Common myeloid progenitor, CD34-positive (primary cell): ENCODE measurements at regions of chr11 and their contacts with region 1.

Region 1: GRCh38 chr11:832321-833113 is at the start of gene CD151:
- DNase-seq: peak in 1 of 3 donors; percentile 58
- H3K4me3 ChIP-seq: peak within 1 kb of the TSS; percentile 37 to 78 (median 66)
- H3K27ac ChIP-seq: peak within 1 kb of the TSS in 1 of 2 experiments; percentile 54
- H3K4me1 ChIP-seq: peaks cover 0 to 72% (median 63%) of the 10 kb centered on the region in 4 experiments
- H3K27me3 ChIP-seq: peaks cover 0 to 56% (median 22%) of the 10 kb centered on the region in 5 experiments

Region 2: GRCh38 chr11:765025-765801 is 67.3 kb before region 1 on chr11:
- CTCF ChIA-PET with region 1: no interaction called
- POLR2A ChIA-PET with region 1: no interaction called
- DNase-seq: peak; percentile 83 to 92 (median 87)
- H3K4me3 ChIP-seq: no peak overlapping the region
- H3K27ac ChIP-seq: no peak overlapping the region
- H3K4me1 ChIP-seq: no peaks in the 10 kb centered on the region
- H3K27me3 ChIP-seq: no peaks in the 10 kb centered on the region

Region 3: GRCh38 chr11:809287-810039 is 23.1 kb before region 1 on chr11 and contains the start of gene RPLP2:
- CTCF ChIA-PET with region 1: interaction called, 10 read pairs
- POLR2A ChIA-PET with region 1: interaction called, 3 read pairs
- DNase-seq: peak; percentile 96 to 98 (median 98)
- H3K4me3 ChIP-seq: peak within 1 kb of the TSS; percentile 75 to 99 (median 94)
- H3K27ac ChIP-seq: peak within 1 kb of the TSS; percentile 86 to 97
- H3K4me1 ChIP-seq: peaks cover 8 to 45% (median 31%) of the 10 kb centered on the region in 4 experiments
- H3K27me3 ChIP-seq: no peaks in the 10 kb centered on the region

Region 4: GRCh38 chr11:819129-819931 is 13.2 kb before region 1 on chr11:
- CTCF ChIA-PET with region 1: interaction called, 15 read pairs
- POLR2A ChIA-PET with region 1: interaction called, 10 read pairs
- DNase-seq: peak; percentile 86 to 94 (median 92)
- H3K4me3 ChIP-seq: peak overlapping the region; percentile 65 to 87 (median 81)
- H3K27ac ChIP-seq: peak overlapping the region; percentile 70 to 85
- H3K4me1 ChIP-seq: peaks cover 0 to 34% (median 33%) of the 10 kb centered on the region in 4 experiments
- H3K27me3 ChIP-seq: no peaks in the 10 kb centered on the region